ENCODE measurements at regions of chr2 and their contacts with region 1.

Region 1: GRCh38 chr2:86079981-86080911 is 25.4 kb downstream of the POLR1A start:
- DNase-seq: peak; percentile 86
- H3K4me3 ChIP-seq: no peak overlapping the region
- H3K27ac ChIP-seq: peak overlapping the region; percentile 17; the same call in 1 of the 2 replicates
- H3K4me1 ChIP-seq: no peaks in the 10 kb centered on the region; the same call in 1 of the 2 replicates
- H3K27me3 ChIP-seq: no peaks in the 10 kb centered on the region

Region 2: DNA sequence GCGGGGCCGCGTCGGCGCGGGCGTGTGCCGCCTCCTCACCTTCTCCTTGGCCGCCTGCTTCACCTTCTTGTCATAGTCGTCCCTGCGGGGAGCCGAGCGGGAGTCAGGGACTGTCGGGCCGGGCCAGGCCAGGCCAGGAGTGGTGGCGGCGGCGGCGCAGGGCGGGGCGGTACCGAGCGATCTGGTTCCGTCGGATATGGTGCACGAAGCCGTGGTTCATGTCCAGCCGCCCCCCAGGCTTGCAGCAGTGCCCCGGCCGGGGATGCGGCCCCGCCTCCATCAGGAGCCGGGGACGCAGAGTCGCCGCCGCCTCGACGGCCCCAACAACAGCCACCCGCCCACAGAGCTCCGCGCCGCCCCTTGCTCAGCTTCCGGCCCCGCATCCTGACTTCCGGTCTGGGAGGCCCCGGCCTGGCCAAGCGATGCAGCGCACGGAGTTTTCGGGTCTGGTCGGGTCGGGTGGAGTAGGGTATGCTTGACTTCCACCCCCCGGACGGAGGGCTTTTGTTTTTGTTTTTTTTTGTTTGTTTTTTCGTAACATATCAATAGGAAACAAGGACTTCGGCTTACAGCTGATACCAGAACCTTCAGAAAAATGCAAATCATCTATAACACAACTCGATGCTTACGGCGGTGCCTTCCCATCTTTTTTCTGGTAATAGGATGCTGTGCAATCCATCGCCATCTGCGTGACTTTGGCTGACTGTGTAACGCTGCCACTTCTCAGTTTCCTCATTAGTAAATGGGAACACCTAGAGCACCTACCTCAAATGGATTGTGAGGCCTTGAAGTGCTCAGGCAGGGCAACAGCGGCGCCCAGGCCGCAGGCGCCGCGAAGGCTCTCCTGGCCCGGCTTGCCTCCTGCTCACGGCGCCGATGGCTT is 468.3 kb before region 1 on chr2 and contains the start of gene C2orf68:
- in situ Hi-C with region 1: no loop called
- DNase-seq: peak; percentile 94
- H3K4me3 ChIP-seq: peak within 1 kb of the TSS; percentile 77
- H3K27ac ChIP-seq: peak within 1 kb of the TSS; percentile 46
- H3K4me1 ChIP-seq: peaks cover 5% of the 10 kb centered on the region
- H3K27me3 ChIP-seq: no peaks in the 10 kb centered on the region
- total RNA-seq, gene C2orf68: 9.8 and 19.5 TPM in 2 replicates

Region 3: DNA sequence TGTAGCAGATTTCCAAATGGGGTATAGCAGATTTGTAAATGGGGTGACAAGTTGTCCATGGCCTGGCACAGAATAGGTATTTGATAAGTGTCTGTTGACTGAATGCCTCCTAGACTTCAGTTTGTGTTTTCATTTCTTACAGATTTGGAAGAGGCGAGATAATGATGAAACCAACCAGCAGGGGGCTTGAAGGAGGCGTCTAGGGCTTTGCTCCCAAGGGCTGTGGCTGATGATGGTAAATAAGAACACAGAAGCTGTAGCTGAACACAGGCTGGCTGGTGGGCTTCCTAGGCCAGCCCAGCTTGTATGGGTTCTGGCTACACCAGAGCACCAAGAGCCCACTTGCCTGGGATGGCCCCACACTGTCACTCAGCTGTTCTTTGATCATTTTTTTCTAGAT is 431.6 kb before region 1 on chr2:
- in situ Hi-C with region 1: loop called (anchors 25 kb)
- DNase-seq: peak; percentile 80
- H3K4me3 ChIP-seq: no peak overlapping the region
- H3K27ac ChIP-seq: peak overlapping the region; percentile 75
- H3K4me1 ChIP-seq: peaks cover 40% of the 10 kb centered on the region
- H3K27me3 ChIP-seq: no peaks in the 10 kb centered on the region

Region 4: DNA sequence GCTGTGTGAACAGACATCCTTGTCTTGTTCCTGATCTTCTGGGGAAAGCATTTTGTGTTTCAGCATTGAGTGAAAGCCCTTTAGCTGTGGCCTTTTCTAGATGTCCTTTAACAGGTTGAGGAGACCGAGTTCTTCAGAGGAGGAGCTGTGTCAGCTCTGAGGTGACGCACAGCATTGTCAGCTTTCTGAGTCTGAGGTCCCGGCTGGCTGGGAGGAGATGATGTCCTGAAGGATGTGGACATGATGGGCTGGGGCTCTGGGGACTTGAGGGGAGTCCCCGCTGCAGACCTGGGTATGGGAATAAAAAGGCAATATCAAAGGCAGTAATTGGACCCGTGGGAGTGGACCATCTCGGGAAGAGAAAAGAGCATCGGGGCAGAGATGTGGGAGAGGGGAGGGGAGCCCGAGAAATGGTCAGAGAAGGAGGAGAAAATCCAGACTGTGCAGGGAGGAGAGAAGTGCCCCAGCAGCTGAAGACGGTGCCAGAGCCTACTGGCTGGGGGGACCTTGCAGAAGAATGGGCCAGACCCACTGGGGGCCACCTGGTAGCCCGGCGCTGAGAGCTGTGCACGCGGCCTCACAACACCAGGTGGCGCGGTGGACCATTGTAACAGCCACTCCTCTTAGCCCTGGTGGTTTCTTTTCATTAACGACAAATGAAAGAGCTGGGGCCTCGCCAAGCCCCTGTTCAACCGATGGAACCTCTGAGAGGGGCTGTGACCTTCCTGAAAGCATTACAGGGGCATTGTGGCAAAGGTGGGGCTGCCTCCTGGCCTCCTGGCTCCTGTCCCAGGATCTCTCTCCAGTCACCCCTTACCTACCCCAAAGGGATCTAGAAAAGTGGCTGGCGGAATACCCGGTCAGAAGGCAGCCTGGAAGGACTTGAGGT is 253.0 kb before region 1 on chr2:
- in situ Hi-C with region 1: loop called (anchors 5 kb)
- DNase-seq: peak; percentile 88
- H3K4me3 ChIP-seq: peak overlapping the region; percentile 60
- H3K27ac ChIP-seq: no peak overlapping the region
- H3K4me1 ChIP-seq: no peaks in the 10 kb centered on the region
- H3K27me3 ChIP-seq: no peaks in the 10 kb centered on the region

Region 5: DNA sequence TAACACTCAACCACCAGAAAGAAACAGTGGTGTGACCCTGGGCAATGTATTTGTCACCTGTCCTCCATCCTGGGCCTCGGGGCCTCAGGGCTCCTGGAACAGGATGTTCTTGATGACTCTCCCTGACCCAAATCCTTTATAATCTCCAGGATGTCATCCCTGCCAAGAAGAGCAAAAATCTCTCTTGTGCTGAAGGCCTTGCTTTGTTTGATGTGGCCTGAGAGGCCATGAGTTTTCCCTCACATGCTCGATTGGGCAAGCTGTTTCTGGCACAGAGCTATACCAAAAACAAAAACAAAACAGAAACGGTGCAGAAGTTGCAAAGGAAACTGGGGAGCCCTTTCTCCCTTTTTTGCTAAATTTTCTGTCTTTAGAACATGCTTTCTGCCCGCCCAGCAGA is 155.7 kb before region 1 on chr2:
- in situ Hi-C with region 1: no loop called
- DNase-seq: peak; percentile 83
- H3K4me3 ChIP-seq: no peak overlapping the region
- H3K27ac ChIP-seq: no peak overlapping the region
- H3K4me1 ChIP-seq: peaks cover 14% of the 10 kb centered on the region; the same call in 1 of the 2 replicates
- H3K27me3 ChIP-seq: no peaks in the 10 kb centered on the region